ENCODE measurements at regions of chr20 and their contacts with region 1.

Region 1: GRCh38 chr20:58995461-58996225 is 11.4 kb downstream of the CTSZ start:
- DNase-seq: peak in 1 of 2 donors; percentile 61
- ATAC-seq: no peak
- H3K4me3 ChIP-seq: no peak overlapping the region
- H3K27ac ChIP-seq: no peak overlapping the region
- H3K4me1 ChIP-seq: no peaks in the 10 kb centered on the region
- H3K27me3 ChIP-seq: no peaks in the 10 kb centered on the region

Region 2: GRCh38 chr20:58944589-58945008 is 51.0 kb before region 1 on chr20:
- intact Hi-C with region 1: no loop called
- DNase-seq: no peak
- ATAC-seq: no peak
- H3K4me3 ChIP-seq: no peak overlapping the region
- H3K27ac ChIP-seq: no peak overlapping the region
- H3K4me1 ChIP-seq: no peaks in the 10 kb centered on the region
- H3K27me3 ChIP-seq: no peaks in the 10 kb centered on the region

Region 3: GRCh38 chr20:59032023-59032712 is 36.5 kb after region 1 on chr20 and contains the start of gene ATP5F1E:
- intact Hi-C with region 1: loop called in 1 of 2 experiments (anchors 5 kb)
- DNase-seq: peak; percentile 98
- ATAC-seq: peak; percentile 100
- H3K4me3 ChIP-seq: peak within 1 kb of the TSS; percentile 52 to 78
- H3K27ac ChIP-seq: peak within 1 kb of the TSS; percentile 24 to 71
- H3K4me1 ChIP-seq: peaks cover 0 to 5% of the 10 kb centered on the region in 2 donors
- H3K27me3 ChIP-seq: no peaks in the 10 kb centered on the region
- total RNA-seq, gene ATP5F1E: 48.2 to 50.1 TPM